ENCODE measurements at regions of chr2 and their contacts with region 1.

Region 1: GRCh38 chr2:135741395-135742324 is at the start of gene UBXN4:
- DNase-seq: peak; percentile 98
- H3K4me3 ChIP-seq: peak within 1 kb of the TSS; percentile 73 to 98 (median 87)
- H3K27ac ChIP-seq: peak within 1 kb of the TSS; percentile 96 to 100 (median 99)
- H3K4me1 ChIP-seq: peaks cover 7 to 26% (median 18%) of the 10 kb centered on the region in 4 donors
- H3K27me3 ChIP-seq: no peaks in the 10 kb centered on the region
- CTCF ChIP-seq: peak in 4 of 5 experiments; percentile 19 to 48 (median 32)
- EP300 ChIP-seq: no peak
- POLR2A ChIP-seq: peak; percentile 96
- total RNA-seq, gene UBXN4: 54.2 to 101 (median 61.3) TPM

Region 2: DNA sequence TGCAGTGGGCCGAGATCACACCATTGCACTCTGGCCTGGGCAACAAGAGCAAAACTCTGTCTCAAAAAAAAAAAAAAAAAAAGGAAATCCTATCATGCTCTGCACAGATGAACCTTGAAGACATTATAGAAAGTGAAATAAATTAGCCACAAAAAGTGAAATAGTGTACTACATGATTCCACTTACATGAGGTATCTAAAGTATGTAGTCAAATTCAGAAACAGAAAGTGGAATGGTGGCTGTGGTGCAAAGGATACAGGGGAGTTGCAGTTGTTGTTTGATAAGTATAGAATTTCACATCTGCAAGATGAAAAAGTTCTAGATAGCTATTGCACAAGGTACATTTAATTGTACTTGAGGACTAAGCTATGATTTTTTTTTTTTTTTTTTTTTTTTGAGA is 215.9 kb before region 1 on chr2:
- in situ Hi-C with region 1: loop called in 1 of 4 experiments (anchors 10 kb)
- intact Hi-C with region 1: loop called (anchors 10 kb)
- DNase-seq: no peak
- H3K4me3 ChIP-seq: no peak overlapping the region
- H3K27ac ChIP-seq: no peak overlapping the region
- H3K4me1 ChIP-seq: peaks cover 0 to 6% (median 0%) of the 10 kb centered on the region in 4 donors
- H3K27me3 ChIP-seq: no peaks in the 10 kb centered on the region
- CTCF ChIP-seq: no peak
- EP300 ChIP-seq: no peak
- POLR2A ChIP-seq: no peak

Region 3: DNA sequence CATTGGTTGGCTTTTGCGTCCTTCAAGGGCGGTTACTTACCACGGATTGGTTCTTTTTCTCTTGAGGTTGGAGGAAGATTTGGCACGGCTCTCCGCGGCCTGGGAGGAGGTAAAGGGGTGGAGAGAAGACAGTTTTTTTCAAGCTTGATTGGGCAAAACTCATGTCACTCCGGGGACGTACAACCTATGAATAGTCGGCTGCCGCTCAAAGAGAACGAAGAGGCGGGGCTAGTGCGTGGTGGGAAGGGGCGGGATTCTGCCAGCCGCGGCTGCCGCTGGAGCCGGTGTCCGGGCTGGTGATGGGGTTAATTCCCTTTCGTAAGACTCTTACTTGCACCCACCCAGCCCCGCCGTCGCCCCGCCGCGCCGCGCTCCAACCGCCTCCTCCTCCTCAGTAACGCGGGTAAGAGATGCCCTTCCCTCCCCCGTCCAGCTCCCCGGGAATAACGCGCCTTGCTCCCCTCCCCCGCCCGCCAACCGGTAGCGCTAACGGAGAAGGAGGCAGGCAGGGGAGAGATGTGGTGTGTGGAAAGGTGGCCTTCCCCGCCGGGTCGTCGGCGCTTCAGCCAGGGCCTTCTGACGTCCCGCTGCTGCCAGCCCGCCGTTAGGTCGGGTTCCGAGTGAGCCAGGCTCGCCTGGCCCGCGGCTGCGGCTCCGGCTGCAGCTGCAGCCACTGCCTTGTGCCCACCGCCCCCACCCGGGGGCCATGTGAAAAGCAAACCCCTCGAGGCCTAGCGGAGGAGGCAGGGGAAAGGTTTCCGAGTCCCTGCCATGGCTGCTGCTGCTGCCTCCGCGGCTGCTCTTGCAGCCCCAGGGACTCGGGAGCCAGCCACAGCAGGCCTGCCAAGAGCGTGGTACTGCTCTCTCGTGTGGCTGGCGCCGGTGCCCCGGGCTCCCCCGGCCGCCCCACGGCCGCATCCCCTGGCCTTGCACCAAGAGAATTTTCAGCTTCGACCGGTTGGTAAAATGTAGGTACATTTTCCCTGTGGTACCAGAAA is 210.1 kb before region 1 on chr2 and contains the start of gene R3HDM1:
- in situ Hi-C with region 1: loop called in 1 of 4 experiments (anchors 10 kb)
- intact Hi-C with region 1: loop called (anchors 10 kb)
- DNase-seq: peak; percentile 98
- H3K4me3 ChIP-seq: peak within 1 kb of the TSS; percentile 78 to 94 (median 88)
- H3K27ac ChIP-seq: peak within 1 kb of the TSS; percentile 88 to 94 (median 92)
- H3K4me1 ChIP-seq: peaks cover 0 to 22% (median 11%) of the 10 kb centered on the region in 4 donors
- H3K27me3 ChIP-seq: no peaks in the 10 kb centered on the region
- CTCF ChIP-seq: peak in 1 of 5 experiments; percentile 13
- EP300 ChIP-seq: no peak
- POLR2A ChIP-seq: peak; percentile 26
- total RNA-seq, gene R3HDM1: 13.7 to 22.3 (median 19.2) TPM

Measured in transverse colon (tissue), 4 donors.